Heart left ventricle (tissue), 16 donors: ENCODE measurements at regions of chr5 and their contacts with region 1.

Region 1: GRCh38 chr5:72018146-72018803 is 89.0 kb upstream of the MAP1B start:
- DNase-seq: no peak
- ATAC-seq: no peak
- H3K4me3 ChIP-seq: no peak overlapping the region
- H3K27ac ChIP-seq: no peak overlapping the region
- H3K4me1 ChIP-seq: peaks cover 0 to 8% (median 0%) of the 10 kb centered on the region in 12 donors
- H3K27me3 ChIP-seq: no peaks in the 10 kb centered on the region
- CTCF ChIP-seq: peak; percentile 63 to 91 (median 76)
- POLR2A ChIP-seq: no peak

Region 2: GRCh38 chr5:71932655-71933338 is 85.5 kb before region 1 on chr5:
- intact Hi-C with region 1: loop called in 1 of 10 experiments (anchors 5 kb)
- DNase-seq: peak; percentile 50 to 76 (median 68)
- ATAC-seq: peak; percentile 80 to 94 (median 90)
- H3K4me3 ChIP-seq: no peak overlapping the region
- H3K27ac ChIP-seq: peak overlapping the region in 9 of 12 donors; percentile 11 to 66 (median 52)
- H3K4me1 ChIP-seq: peaks cover 0 to 19% (median 11%) of the 10 kb centered on the region in 12 donors
- H3K27me3 ChIP-seq: no peaks in the 10 kb centered on the region
- CTCF ChIP-seq: no peak
- POLR2A ChIP-seq: no peak

Region 3: GRCh38 chr5:72156946-72157624 is 138.8 kb after region 1 on chr5:
- intact Hi-C with region 1: no loop called
- DNase-seq: peak in 1 of 5 donors; percentile 39
- ATAC-seq: peak in 2 of 4 donors; percentile 25 to 68
- H3K4me3 ChIP-seq: no peak overlapping the region
- H3K27ac ChIP-seq: peak overlapping the region in 8 of 12 donors; percentile 15 to 47 (median 30)
- H3K4me1 ChIP-seq: peaks cover 0 to 66% (median 30%) of the 10 kb centered on the region in 12 donors
- H3K27me3 ChIP-seq: no peaks in the 10 kb centered on the region
- CTCF ChIP-seq: no peak
- POLR2A ChIP-seq: no peak